Ovary (tissue), 10 donors: ENCODE measurements at regions of chr2 and their contacts with region 1.

Region 1: DNA sequence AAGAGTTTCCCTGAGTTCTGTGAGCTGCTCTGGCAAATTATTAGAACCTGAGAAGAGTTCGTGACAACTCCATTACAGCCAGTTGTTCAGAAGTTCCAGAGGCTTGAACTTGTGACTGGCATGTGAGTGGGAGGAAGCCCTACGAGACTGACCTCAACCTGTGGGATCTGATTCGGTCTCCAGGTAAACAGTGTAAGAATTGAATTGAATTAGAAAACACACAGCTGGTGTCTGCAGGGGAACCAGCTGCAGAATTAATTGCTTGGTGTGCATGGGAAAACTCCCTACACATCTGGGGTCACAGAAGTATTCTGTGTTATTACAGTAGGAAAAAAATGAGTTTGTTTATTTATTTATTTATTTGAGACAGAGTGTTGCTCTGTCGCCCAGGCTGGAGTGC is 14.0 kb upstream of the ITSN2 start:
- DNase-seq: no peak
- H3K4me3 ChIP-seq: no peak overlapping the region
- H3K27ac ChIP-seq: no peak overlapping the region
- H3K4me1 ChIP-seq: no peaks in the 10 kb centered on the region
- H3K27me3 ChIP-seq: no peaks in the 10 kb centered on the region
- CTCF ChIP-seq: no peak
- EP300 ChIP-seq: no peak
- POLR2A ChIP-seq: no peak

Region 2: DNA sequence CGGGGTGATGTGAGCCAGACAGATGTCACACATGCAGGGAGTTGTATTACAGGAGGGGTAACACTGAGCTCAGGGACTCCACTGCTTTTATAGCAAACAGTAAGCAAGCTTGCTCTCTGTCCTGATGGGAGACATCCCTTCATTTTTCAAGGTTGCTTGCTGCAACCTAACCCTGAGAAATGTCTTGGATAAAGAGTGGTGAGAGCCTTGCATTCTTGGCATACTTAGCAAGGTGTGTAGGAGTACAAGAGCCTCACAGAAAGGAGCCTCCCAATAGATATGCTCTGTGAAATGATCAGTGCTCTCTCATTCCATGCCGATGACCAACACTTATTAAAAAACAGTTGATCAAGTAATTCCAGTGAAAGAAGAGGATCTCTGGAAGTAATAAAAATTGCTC is 259.2 kb before region 1 on chr2:
- intact Hi-C with region 1: loop called in 1 of 4 experiments (anchors 5 kb)
- DNase-seq: no peak
- H3K4me3 ChIP-seq: no peak overlapping the region
- H3K27ac ChIP-seq: no peak overlapping the region
- H3K4me1 ChIP-seq: peaks cover 7% of the 10 kb centered on the region
- H3K27me3 ChIP-seq: no peaks in the 10 kb centered on the region
- CTCF ChIP-seq: no peak
- EP300 ChIP-seq: no peak
- POLR2A ChIP-seq: no peak

Region 3: DNA sequence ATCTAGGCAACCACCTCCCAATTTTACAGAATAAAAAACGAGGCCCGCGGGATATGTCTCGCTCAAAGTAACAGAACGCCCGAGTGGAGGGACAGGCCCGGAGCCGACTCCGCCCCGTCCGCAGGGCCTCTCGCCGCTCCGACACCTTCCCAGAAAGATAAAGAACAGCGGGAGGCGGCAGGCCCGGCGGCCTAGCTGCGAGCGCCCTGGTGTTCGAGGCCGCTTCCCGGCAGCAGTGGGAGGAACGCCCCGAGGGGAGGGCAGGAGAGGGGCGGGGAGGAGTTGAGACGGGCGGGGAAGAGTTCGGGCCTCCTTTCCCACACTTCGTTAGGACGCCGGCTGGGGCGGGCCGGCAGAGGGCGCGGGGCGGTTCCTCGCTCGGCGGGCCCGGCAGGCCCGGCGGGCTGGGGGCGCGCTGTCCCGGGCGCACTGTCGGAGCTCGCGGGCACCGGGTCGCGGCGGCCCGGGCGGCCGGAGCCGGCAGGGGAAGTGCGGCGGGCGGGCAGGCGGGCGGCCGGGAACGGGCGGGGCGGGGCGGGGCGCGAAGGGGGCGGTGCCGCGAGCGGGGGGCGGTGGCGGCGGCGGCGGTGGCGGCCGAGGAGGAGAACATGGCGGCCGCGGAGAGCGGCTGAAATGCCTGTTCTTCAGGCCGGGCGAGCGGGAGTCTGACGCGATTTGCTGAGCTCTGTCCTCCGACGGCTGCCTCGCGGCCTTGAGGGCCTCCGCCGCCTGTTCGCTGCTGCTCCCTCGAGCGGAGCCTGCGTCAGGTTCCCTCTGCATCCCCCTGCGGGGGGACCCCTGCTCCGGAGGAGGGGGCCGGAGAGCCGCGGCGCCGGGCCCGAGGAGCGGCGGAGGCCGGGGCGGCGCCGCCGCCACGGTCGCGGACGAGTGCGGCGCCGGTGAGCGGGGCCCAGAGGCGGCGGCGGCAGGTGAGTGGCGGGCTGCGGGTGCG is 116.6 kb after region 1 on chr2 and contains the start of gene NCOA1:
- intact Hi-C with region 1: no loop called
- DNase-seq: peak; percentile 87 to 92 (median 91)
- H3K4me3 ChIP-seq: peak within 1 kb of the TSS; percentile 95
- H3K27ac ChIP-seq: peak within 1 kb of the TSS; percentile 72 to 92
- H3K4me1 ChIP-seq: peaks cover 9% of the 10 kb centered on the region
- H3K27me3 ChIP-seq: no peaks in the 10 kb centered on the region
- CTCF ChIP-seq: peak in 1 of 3 donors; percentile 11
- EP300 ChIP-seq: no peak
- POLR2A ChIP-seq: peak; percentile 33
- total RNA-seq, gene NCOA1: 39.3 to 69.0 (median 58.1) TPM